ENCODE measurements at regions of chr20 and their contacts with region 1.

Region 1: DNA sequence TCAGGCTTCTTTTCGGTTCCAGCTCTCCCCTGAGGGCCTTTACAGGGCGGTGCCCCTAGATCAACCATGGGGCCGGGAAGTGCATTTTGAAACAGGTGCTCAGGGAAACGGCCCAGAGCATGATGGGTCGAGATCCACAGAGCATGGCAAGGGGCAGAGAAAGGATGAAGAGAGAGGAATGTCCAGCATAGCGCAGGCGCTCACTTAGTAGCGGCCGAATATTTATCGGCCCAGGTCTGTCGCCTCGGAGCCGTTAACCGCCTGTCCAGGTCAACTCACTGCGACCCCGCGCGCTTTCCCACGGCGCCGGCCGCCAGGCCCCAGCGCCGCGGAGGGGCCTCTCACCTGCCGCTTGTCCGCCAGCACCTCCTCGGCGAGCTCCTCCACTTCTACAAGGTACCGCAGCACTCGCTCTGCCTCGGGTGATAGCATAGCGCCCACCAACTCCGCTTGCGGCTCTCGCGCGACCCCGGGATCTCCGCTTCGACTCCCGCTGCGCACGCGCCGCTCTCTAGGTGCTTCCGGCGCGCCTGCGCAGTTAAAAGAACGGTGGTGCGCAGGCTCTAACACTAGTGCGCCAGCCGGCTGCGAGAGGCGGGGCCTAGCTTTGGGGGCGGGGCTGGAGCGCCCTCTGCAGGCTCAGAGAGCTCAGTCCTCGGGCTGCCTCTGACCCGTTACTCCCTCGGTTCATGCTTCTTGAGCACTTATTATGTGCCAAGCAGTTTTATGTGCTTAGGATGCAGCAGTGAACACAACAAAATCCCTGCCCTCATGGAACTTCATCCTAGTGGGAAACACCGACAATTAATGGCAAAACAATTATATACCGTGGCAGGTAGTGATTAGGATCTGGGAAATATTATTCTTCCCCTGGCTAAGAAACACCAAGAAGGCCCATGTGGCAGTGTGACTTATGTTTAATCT is at the start of gene PDRG1:
- DNase-seq: peak; percentile 91 to 98 (median 97)
- ATAC-seq: peak; percentile 98
- H3K4me3 ChIP-seq: peak within 1 kb of the TSS; percentile 84 to 96
- H3K4me3 Mint-ChIP-seq: peak within 1 kb of the TSS; percentile 97
- H3K27ac ChIP-seq: peak within 1 kb of the TSS; percentile 46 to 71
- H3K27ac Mint-ChIP-seq: peak within 1 kb of the TSS; percentile 96
- H3K4me1 ChIP-seq: peaks cover 16% of the 10 kb centered on the region
- H3K4me1 Mint-ChIP-seq: peaks cover 31% of the 10 kb centered on the region
- H3K27me3 ChIP-seq: no peaks in the 10 kb centered on the region
- H3K27me3 Mint-ChIP-seq: peaks cover 12% of the 10 kb centered on the region
- CTCF ChIP-seq: peak; percentile 88
- total RNA-seq, gene PDRG1: 12.2 to 13.4 TPM

Region 2: GRCh38 chr20:31572701-31573554 is 378.9 kb before region 1 on chr20:
- CTCF ChIA-PET with region 1: no interaction called
- POLR2A ChIA-PET with region 1: no interaction called
- intact Hi-C with region 1: loop called in 1 of 2 experiments (anchors 5 kb)
- DNase-seq: peak; percentile 75 to 93 (median 85)
- ATAC-seq: peak; percentile 91
- H3K4me3 ChIP-seq: peak overlapping the region; percentile 75 to 79
- H3K4me3 Mint-ChIP-seq: peak overlapping the region; percentile 87
- H3K27ac ChIP-seq: peak overlapping the region; percentile 51 to 78
- H3K27ac Mint-ChIP-seq: peak overlapping the region; percentile 84
- H3K4me1 ChIP-seq: peaks cover 16% of the 10 kb centered on the region
- H3K4me1 Mint-ChIP-seq: peaks cover 26% of the 10 kb centered on the region
- H3K27me3 ChIP-seq: no peaks in the 10 kb centered on the region
- H3K27me3 Mint-ChIP-seq: no peaks in the 10 kb centered on the region
- CTCF ChIP-seq: no peak

Region 3: GRCh38 chr20:31861346-31862156 is 90.2 kb before region 1 on chr20:
- CTCF ChIA-PET with region 1: interaction called, 10 read pairs
- POLR2A ChIA-PET with region 1: no interaction called
- intact Hi-C with region 1: no loop called
- DNase-seq: peak; percentile 47 to 85 (median 70)
- ATAC-seq: peak; percentile 93
- H3K4me3 ChIP-seq: peak overlapping the region; percentile 37 to 43
- H3K4me3 Mint-ChIP-seq: peak overlapping the region; percentile 78
- H3K27ac ChIP-seq: no peak overlapping the region
- H3K27ac Mint-ChIP-seq: no peak overlapping the region
- H3K4me1 ChIP-seq: peaks cover 9% of the 10 kb centered on the region
- H3K4me1 Mint-ChIP-seq: peaks cover 11% of the 10 kb centered on the region
- H3K27me3 ChIP-seq: peaks cover 16% of the 10 kb centered on the region in 2 experiments
- H3K27me3 Mint-ChIP-seq: peaks cover 28% of the 10 kb centered on the region
- CTCF ChIP-seq: no peak

Region 4: GRCh38 chr20:31879143-31879987 is 72.4 kb before region 1 on chr20:
- CTCF ChIA-PET with region 1: interaction called, 5 read pairs
- POLR2A ChIA-PET with region 1: no interaction called
- intact Hi-C with region 1: loop called (anchors 1 kb)
- DNase-seq: peak; percentile 50 to 90 (median 74)
- ATAC-seq: peak; percentile 84
- H3K4me3 ChIP-seq: peak overlapping the region; percentile 59 to 73
- H3K4me3 Mint-ChIP-seq: peak overlapping the region; percentile 91
- H3K27ac ChIP-seq: no peak overlapping the region
- H3K27ac Mint-ChIP-seq: peak overlapping the region; percentile 63
- H3K4me1 ChIP-seq: no peaks in the 10 kb centered on the region
- H3K4me1 Mint-ChIP-seq: peaks cover 11% of the 10 kb centered on the region
- H3K27me3 ChIP-seq: no peaks in the 10 kb centered on the region
- H3K27me3 Mint-ChIP-seq: peaks cover 3% of the 10 kb centered on the region
- CTCF ChIP-seq: no peak

Region 5: GRCh38 chr20:31968291-31969126 is 16.7 kb after region 1 on chr20:
- CTCF ChIA-PET with region 1: interaction called, 16 read pairs
- POLR2A ChIA-PET with region 1: interaction called, 3 read pairs
- intact Hi-C with region 1: loop called (anchors 1 kb)
- DNase-seq: peak; percentile 70 to 89 (median 82)
- ATAC-seq: peak; percentile 99
- H3K4me3 ChIP-seq: peak overlapping the region in 1 of 2 experiments; percentile 20
- H3K4me3 Mint-ChIP-seq: peak overlapping the region; percentile 85
- H3K27ac ChIP-seq: no peak overlapping the region
- H3K27ac Mint-ChIP-seq: no peak overlapping the region
- H3K4me1 ChIP-seq: no peaks in the 10 kb centered on the region
- H3K4me1 Mint-ChIP-seq: peaks cover 6% of the 10 kb centered on the region
- H3K27me3 ChIP-seq: peaks cover 11 to 21% of the 10 kb centered on the region in 2 experiments
- H3K27me3 Mint-ChIP-seq: peaks cover 56% of the 10 kb centered on the region
- CTCF ChIP-seq: no peak

Region 6: DNA sequence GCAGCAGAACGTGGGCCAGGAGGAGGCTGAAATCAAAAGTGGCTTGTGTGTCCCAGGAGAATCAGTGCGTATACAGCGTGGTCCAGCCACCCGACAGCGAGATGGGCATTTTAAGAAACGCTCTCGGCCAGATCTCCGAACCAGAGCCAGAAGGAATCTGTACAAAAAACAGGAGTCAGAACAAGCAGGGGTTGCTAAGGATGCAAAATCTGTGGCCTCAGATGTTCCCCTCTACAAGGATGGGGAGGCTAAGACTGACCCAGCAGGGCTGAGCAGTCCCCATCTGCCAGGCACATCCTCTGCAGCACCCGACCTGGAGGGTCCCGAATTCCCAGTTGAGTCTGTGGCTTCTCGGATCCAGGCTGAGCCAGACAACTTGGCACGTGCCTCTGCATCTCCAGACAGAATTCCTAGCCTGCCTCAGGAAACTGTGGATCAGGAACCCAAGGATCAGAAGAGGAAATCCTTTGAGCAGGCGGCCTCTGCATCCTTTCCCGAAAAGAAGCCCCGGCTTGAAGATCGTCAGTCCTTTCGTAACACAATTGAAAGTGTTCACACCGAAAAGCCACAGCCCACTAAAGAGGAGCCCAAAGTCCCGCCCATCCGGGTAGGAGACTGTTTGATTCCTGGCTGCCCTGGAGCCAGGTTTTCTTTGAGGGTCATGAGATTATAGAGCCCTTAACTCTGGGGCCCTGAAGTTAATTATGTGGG is 481.7 kb after region 1 on chr20:
- CTCF ChIA-PET with region 1: no interaction called
- POLR2A ChIA-PET with region 1: no interaction called
- intact Hi-C with region 1: no loop called
- DNase-seq: no peak
- ATAC-seq: no peak
- H3K4me3 ChIP-seq: no peak overlapping the region
- H3K4me3 Mint-ChIP-seq: no peak overlapping the region
- H3K27ac ChIP-seq: no peak overlapping the region
- H3K27ac Mint-ChIP-seq: peak overlapping the region; percentile 16
- H3K4me1 ChIP-seq: no peaks in the 10 kb centered on the region
- H3K4me1 Mint-ChIP-seq: no peaks in the 10 kb centered on the region
- H3K27me3 ChIP-seq: no peaks in the 10 kb centered on the region
- H3K27me3 Mint-ChIP-seq: no peaks in the 10 kb centered on the region
- CTCF ChIP-seq: no peak

Measured in CD8-positive, alpha-beta T cell (primary cell).